ENCODE measurements at regions of chr7 and their contacts with region 1.

Region 1: DNA sequence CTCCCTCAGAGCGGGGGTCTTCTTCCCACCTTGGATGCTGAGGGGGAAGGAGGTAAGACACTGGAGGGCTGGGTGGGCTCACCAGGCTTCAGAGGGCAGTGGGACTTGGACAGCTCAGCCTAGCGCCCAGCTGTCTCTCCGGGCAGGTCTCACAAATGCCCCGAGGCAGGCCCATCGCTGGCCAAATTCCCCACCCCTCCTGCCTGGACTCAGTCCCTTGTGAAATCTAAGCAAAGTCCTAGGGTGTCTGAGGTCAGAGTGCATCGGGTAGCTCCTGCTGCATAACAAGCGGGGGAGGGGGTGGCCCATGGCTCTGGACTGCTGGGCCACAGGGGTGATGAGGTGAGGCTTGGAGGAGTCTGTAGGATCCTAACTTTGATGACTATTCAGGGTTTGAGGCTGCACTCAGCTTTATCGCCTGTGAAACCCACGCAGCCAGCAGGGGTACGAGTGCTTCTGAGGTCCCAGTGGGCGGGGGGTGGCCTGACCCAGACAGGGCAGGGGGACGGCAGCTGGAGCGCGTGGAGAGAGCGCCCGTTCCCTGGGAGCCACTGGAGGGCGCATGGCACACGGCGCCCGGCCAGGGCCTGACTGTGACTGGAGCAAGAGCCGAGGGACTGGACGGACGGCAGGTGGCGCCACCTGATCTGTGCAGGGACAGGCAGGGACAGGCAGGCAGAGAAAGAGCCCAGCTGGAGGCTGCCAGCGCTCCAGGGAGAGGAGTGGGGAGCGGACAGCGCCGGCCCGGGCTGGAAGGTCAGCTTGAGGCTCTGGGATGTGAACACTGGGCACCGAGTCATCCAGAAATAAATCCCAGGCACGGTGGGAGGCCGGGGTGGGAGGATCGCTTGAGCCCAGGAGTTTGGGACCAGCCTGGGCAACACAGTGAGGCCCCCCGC is 10.0 kb downstream of the CYP2W1 start:
- DNase-seq: peak; percentile 88
- H3K4me3 ChIP-seq: no peak overlapping the region
- CTCF ChIP-seq: peak; percentile 99

Region 2: GRCh38 chr7:1033546-1034145 is 40.7 kb after region 1 on chr7:
- in situ Hi-C with region 1: no loop called
- DNase-seq: no peak
- H3K4me3 ChIP-seq: no peak overlapping the region
- CTCF ChIP-seq: no peak

Region 3: DNA sequence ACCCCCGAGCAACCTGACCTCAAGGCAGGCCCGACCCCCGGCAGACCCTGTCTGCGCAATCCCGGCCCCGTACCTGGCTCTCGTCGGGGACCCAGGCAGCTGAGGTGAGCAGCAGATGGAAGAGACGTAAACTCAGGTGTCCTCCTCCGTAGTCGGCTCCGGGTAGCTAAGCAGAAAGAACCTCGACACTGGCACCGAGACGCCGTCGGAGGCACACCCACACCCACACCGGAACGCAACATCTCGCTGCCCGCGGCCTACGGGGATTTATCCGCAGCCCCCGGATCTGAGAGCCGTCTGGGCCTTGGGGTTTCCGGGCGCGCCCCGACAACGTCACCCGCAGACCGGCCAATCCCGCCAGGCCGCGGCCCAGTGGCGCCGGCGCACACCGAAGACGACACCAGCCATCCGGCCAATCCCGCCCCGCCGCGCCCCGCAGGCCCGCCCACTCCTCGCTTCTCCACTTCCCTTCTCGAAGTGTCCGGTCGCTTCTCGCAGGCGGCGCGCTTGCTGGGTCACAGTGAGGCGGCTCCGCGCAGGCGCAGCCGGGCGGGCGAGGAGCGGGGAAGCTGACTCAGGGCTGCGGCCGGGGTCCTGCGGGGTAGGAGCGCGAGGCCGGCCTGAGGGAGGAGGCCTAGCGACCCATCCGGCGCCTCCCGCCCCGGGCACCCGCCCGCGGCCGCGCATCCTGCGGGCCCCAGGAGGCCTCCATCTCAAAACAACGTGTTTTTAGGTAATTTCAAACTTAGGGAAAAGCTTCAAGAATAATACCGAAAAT is 167.1 kb after region 1 on chr7 and contains the start of gene ZFAND2A:
- in situ Hi-C with region 1: loop called (anchors 25 kb)
- DNase-seq: peak; percentile 95
- H3K4me3 ChIP-seq: peak within 1 kb of the TSS; percentile 99
- CTCF ChIP-seq: no peak